ENCODE measurements at regions of chr3 and their contacts with region 1.

Region 1: DNA sequence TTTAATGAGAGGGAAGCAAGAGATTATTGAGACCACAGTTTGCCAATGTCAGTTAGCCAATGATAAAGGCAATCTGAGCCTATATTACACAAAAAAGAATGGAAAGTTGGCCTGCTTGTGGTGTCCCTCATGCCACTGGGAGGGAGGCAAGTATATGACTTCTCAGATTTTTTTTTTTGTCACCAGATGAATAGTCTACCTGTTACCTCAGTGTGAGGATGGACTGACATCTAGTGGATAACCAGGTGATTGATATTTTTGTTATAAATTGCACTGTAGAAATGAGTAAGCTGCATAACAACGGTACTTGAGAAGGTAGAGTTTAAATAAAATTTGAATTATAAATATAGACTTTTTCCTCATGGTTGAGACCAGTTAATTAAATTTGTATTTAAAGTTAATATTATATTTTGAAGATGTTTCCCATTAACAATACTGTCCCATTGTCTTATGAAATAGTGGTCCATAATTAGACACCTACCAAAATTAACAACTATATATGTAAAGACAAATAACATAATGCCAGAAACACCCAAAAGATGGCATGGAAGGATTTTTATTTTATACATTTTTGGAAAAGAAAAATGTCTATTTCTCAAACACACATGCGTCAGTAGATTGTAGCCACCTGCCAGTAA is 237.8 kb upstream of the GADL1 start:
- DNase-seq: peak in 6 of 9 donors; percentile 2 to 55 (median 39)
- ATAC-seq: peak; percentile 58
- H3K4me3 ChIP-seq: no peak overlapping the region
- H3K4me3 Mint-ChIP-seq: no peak overlapping the region
- H3K27ac ChIP-seq: no peak overlapping the region
- H3K27ac Mint-ChIP-seq: no peak overlapping the region
- H3K4me1 ChIP-seq: no peaks in the 10 kb centered on the region
- H3K4me1 Mint-ChIP-seq: peaks cover 0 to 18% (median 0%) of the 10 kb centered on the region in 7 donors
- H3K27me3 ChIP-seq: no peaks in the 10 kb centered on the region
- H3K27me3 Mint-ChIP-seq: no peaks in the 10 kb centered on the region

Region 2: DNA sequence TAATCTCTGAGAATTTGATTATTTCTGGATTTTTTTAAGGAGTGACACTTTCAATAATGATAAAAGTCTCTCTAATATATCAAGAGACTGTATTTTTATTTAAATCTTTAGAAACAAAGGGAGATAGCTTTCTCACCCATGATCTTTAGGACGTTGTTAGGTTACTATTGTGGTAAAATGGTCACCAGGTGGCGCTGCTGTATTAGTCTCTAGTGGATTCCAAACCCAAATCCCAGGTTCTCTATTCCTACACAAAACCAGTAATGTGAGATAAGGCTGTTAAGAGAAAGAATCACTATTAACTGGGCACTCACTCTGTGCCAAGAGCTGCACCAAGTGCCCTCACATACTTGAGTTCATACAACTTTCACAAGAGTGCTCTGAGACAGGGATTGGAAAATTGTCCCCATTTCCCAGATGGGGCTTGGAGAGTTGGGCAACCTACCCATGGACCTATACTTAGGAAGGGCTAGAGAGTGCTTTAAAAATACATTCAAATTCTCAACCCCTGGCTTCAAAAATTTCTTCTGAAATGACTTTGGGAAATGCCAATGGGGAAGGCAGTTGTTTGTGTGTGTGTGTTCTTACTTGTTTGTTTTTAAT is 1119.2 kb before region 1 on chr3:
- CTCF ChIA-PET with region 1: no interaction called
- POLR2A ChIA-PET with region 1: no interaction called
- intact Hi-C with region 1: loop called in 1 of 2 experiments (anchors 2 kb)
- DNase-seq: peak in 8 of 9 donors; percentile 4 to 32 (median 22)
- ATAC-seq: peak; percentile 56
- H3K4me3 ChIP-seq: no peak overlapping the region
- H3K4me3 Mint-ChIP-seq: no peak overlapping the region
- H3K27ac ChIP-seq: no peak overlapping the region
- H3K27ac Mint-ChIP-seq: no peak overlapping the region
- H3K4me1 ChIP-seq: no peaks in the 10 kb centered on the region
- H3K4me1 Mint-ChIP-seq: peaks cover 0 to 5% (median 0%) of the 10 kb centered on the region in 7 donors
- H3K27me3 ChIP-seq: no peaks in the 10 kb centered on the region
- H3K27me3 Mint-ChIP-seq: peaks cover 0 to 13% (median 6%) of the 10 kb centered on the region in 5 donors

Region 3: DNA sequence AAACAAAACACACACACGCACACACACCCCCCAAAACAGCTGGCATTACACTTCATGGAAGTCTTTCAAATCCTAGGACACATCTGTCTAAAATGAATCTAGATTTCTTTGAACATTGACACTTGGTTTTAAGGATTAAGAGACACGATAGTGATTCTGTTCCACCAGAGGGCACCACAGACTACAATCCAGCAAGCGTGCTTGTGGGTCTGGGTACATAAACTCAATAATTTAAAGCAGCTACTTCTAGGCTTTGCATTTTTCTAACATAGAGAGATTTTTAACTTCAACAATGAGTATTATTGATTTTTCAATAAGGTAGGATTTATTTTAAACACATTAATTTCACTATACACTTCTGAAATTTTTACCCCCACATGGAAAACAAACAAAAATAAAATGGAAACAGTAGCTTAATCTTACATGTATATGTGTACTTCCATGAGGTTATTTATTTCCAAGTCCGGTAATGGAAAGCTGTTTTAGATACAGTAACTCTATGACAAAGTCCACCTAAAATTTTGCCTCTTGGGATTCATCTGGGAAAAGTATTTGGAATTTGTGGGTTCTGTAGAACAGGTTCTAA is 1089.9 kb before region 1 on chr3:
- CTCF ChIA-PET with region 1: no interaction called
- POLR2A ChIA-PET with region 1: no interaction called
- intact Hi-C with region 1: loop called in 1 of 2 experiments (anchors 1 kb)
- DNase-seq: peak in 8 of 9 donors; percentile 25 to 73 (median 63)
- ATAC-seq: peak; percentile 68
- H3K4me3 ChIP-seq: no peak overlapping the region
- H3K4me3 Mint-ChIP-seq: no peak overlapping the region
- H3K27ac ChIP-seq: no peak overlapping the region
- H3K27ac Mint-ChIP-seq: no peak overlapping the region
- H3K4me1 ChIP-seq: no peaks in the 10 kb centered on the region
- H3K4me1 Mint-ChIP-seq: peaks cover 0 to 7% (median 4%) of the 10 kb centered on the region in 7 donors
- H3K27me3 ChIP-seq: no peaks in the 10 kb centered on the region
- H3K27me3 Mint-ChIP-seq: peaks cover 17 to 34% (median 28%) of the 10 kb centered on the region in 5 donors

Region 4: DNA sequence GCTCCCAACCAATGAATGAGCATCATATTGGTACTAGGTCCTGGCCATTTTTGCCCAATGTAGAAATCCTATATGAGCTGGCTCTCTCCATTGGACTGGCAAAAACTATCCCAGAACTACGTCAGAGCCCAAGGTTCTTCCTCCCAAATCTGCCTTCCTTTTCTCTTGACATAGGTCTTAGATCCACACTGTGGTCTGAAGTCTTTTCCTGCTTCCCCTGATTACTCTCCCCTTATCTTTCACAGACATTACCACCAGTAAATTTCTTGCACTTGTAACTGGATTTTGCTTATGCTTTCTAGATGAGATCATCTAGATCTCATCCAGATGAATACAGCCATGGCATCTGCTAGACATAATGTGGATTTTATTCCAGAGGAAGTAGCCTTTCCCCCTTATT is 96.6 kb before region 1 on chr3:
- CTCF ChIA-PET with region 1: no interaction called
- POLR2A ChIA-PET with region 1: no interaction called
- intact Hi-C with region 1: no loop called
- DNase-seq: no peak
- ATAC-seq: no peak
- H3K4me3 ChIP-seq: no peak overlapping the region
- H3K4me3 Mint-ChIP-seq: no peak overlapping the region
- H3K27ac ChIP-seq: no peak overlapping the region
- H3K27ac Mint-ChIP-seq: no peak overlapping the region
- H3K4me1 ChIP-seq: no peaks in the 10 kb centered on the region
- H3K4me1 Mint-ChIP-seq: no peaks in the 10 kb centered on the region
- H3K27me3 ChIP-seq: no peaks in the 10 kb centered on the region
- H3K27me3 Mint-ChIP-seq: peaks cover 0 to 6% (median 0%) of the 10 kb centered on the region in 5 donors

Measured in naive thymus-derived CD4-positive, alpha-beta T cell (primary cell).